Activated T-helper 1 cell treated with anti-CD3 and anti-CD28 coated beads, Interleukin-12 subunit alpha, Interleukin-12 subunit beta, Interleukin-2, Interleukin-4 antibody, amounts not matched to agents 30 ng/mL and 10 ng/mL and 1 ng/mL, durations not matched to agents 14 hours and 24 hours and 36 hours (primary cell): ENCODE measurements at regions of chr3 and their contacts with region 1.

Region 1: GRCh38 chr3:196518966-196519717 is 4.0 kb upstream of the SMCO1 start:
- DNase-seq: peak; percentile 40
- H3K4me3 Mint-ChIP-seq: no peak overlapping the region
- H3K27ac Mint-ChIP-seq: no peak overlapping the region
- H3K4me1 Mint-ChIP-seq: no peaks in the 10 kb centered on the region
- H3K27me3 Mint-ChIP-seq: peaks cover 3% of the 10 kb centered on the region

Region 2: GRCh38 chr3:196486263-196486662 is 32.9 kb before region 1 on chr3:
- intact Hi-C with region 1: loop called (anchors 1 kb)
- DNase-seq: no peak
- H3K4me3 Mint-ChIP-seq: no peak overlapping the region
- H3K27ac Mint-ChIP-seq: no peak overlapping the region
- H3K4me1 Mint-ChIP-seq: no peaks in the 10 kb centered on the region
- H3K27me3 Mint-ChIP-seq: no peaks in the 10 kb centered on the region